ENCODE measurements at regions of chr1 and their contacts with region 1.

Region 1: DNA sequence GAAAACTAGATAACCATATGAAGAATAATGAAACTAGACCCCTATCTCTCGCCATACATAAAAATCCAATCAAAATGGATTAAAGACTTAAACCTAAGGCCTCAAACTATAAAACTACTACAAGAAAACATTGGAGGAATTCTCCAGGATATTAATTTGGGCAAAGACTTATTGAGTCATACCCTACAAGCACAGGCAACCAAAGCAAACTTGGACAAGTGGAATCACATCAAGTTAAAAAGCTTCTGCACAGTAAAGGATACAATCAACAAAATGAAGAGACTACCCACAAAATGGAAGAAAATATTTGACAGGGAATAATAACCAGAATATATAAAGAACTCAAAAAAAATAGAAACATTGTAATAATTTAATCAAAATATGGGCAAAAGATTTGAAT is 505.4 kb downstream of the KCNT2 start:
- DNase-seq: no peak
- ATAC-seq: no peak

Region 2: DNA sequence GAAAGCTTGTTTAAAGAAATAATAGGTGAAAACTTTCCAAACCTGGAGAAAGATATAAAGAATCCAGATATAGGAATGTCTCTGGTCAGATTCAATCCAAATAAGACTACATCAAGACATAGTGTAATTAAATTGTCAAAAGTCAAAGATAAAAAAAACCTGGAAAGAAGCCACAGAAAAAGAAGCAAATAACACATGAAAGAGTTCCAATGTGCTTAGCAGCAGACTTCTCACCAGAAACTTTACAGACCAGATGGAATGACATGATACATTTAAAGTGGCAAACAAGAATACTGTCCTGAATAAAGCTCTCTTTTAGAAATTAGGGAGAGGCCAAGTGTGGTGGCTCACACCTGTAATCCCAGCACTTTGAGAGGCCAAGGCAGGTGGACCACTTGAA is 534.4 kb before region 1 on chr1:
- intact Hi-C with region 1: loop called (anchors 5 kb)
- DNase-seq: no peak
- ATAC-seq: no peak

Region 3: DNA sequence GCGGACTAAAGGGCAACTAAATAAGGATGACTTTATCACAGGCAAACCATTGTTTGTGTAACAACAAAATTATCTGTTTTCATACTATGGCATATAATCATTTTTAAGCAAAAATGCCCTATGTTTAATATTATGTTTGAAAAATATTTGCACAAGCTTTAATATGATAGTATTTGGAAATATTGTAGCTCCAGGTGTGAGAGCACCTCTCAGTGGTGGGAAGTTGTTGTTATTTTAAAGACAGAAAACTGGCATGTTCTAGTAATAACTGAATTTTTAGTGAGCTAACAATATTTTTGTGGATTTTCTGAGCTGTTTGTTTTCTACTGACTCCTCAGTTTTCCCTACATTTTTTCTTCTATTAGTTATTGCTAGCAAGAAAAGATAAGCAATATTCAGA is 73.4 kb before region 1 on chr1:
- intact Hi-C with region 1: no loop called
- DNase-seq: no peak
- ATAC-seq: no peak

Region 4: GRCh38 chr1:196180847-196181593 is 78.2 kb after region 1 on chr1:
- intact Hi-C with region 1: no loop called
- DNase-seq: no peak
- ATAC-seq: no peak

Measured in sciatic nerve (tissue), 2 donors.